Heart right ventricle (tissue), 16 donors: ENCODE measurements at regions of chr5 and their contacts with region 1.

Region 1: GRCh38 chr5:173144200-173145176 is at the start of gene BNIP1:
- DNase-seq: peak; percentile 96 to 97
- ATAC-seq: peak; percentile 93 to 97 (median 95)
- H3K4me3 ChIP-seq: peak within 1 kb of the TSS; percentile 51 to 98 (median 86)
- H3K27ac ChIP-seq: peak within 1 kb of the TSS in 9 of 10 donors; percentile 82 to 95 (median 88)
- H3K4me1 ChIP-seq: peaks cover 0 to 18% (median 11%) of the 10 kb centered on the region in 9 donors
- H3K27me3 ChIP-seq: no peaks in the 10 kb centered on the region
- CTCF ChIP-seq: peak; percentile 88 to 98 (median 94)
- total RNA-seq, gene BNIP1: 8.5 to 12.7 (median 9.9) TPM

Region 2: GRCh38 chr5:172984243-172984953 is 160.1 kb before region 1 on chr5:
- intact Hi-C with region 1: loop called in 5 of 10 experiments (anchors 5 to 10 kb)
- DNase-seq: peak; percentile 46 to 50
- ATAC-seq: peak; percentile 50 to 77 (median 66)
- H3K4me3 ChIP-seq: peak overlapping the region; percentile 65 to 95 (median 88)
- H3K27ac ChIP-seq: peak overlapping the region; percentile 86 to 95 (median 92)
- H3K4me1 ChIP-seq: peaks cover 0 to 43% (median 17%) of the 10 kb centered on the region in 9 donors
- H3K27me3 ChIP-seq: no peaks in the 10 kb centered on the region
- CTCF ChIP-seq: peak in 8 of 9 donors; percentile 18 to 56 (median 35)

Region 3: DNA sequence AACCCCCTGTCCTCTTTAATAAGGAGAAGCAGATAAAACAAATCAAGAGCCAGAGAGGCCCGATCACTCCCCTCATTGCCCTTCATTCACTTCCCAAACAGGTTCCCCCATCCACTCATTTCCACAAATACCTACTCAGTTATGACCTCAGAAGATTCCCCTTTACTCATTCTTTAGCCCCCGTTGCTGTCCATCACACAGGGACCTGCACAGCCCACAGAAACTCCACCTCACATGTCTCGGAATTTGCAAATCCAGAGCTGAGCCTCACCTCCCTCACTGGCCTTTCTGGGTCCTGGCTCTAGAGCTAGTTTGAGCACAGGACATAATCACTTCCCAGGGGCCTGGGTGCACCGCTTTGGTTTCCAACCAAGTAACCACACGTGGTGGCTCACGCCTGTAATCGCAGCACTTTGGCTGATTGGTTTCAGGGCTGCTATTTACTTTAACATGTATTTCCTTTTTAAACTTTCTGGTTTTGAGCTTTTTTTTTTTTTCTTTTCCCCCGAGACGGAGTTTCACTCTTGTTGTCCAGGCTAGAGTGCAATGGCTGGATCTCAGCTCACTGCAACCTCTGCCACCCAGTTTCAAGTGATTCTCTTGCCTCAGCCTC is 143.2 kb before region 1 on chr5:
- intact Hi-C with region 1: loop called in 1 of 10 experiments (anchors 10 kb)
- DNase-seq: no peak
- ATAC-seq: peak in 1 of 8 donors; percentile 37
- H3K4me3 ChIP-seq: no peak overlapping the region
- H3K27ac ChIP-seq: no peak overlapping the region
- H3K4me1 ChIP-seq: peaks cover 14 to 68% (median 50%) of the 10 kb centered on the region in 9 donors
- H3K27me3 ChIP-seq: no peaks in the 10 kb centered on the region
- CTCF ChIP-seq: no peak

Region 4: GRCh38 chr5:173016621-173017047 is 127.9 kb before region 1 on chr5:
- intact Hi-C with region 1: loop called in 1 of 10 experiments (anchors 10 kb)
- DNase-seq: peak in 1 of 2 donors; percentile 42
- ATAC-seq: peak; percentile 63 to 92 (median 87)
- H3K4me3 ChIP-seq: no peak overlapping the region
- H3K27ac ChIP-seq: peak overlapping the region; percentile 3 to 90 (median 72)
- H3K4me1 ChIP-seq: peaks cover 2 to 95% (median 33%) of the 10 kb centered on the region in 9 donors
- H3K27me3 ChIP-seq: no peaks in the 10 kb centered on the region
- CTCF ChIP-seq: no peak

Region 5: GRCh38 chr5:173057062-173057924 is 87.2 kb before region 1 on chr5:
- intact Hi-C with region 1: loop called in 2 of 10 experiments (anchors 1 to 2 kb)
- DNase-seq: peak; percentile 99
- ATAC-seq: peak; percentile 93 to 98 (median 97)
- H3K4me3 ChIP-seq: peak overlapping the region; percentile 85 to 100 (median 100)
- H3K27ac ChIP-seq: peak overlapping the region; percentile 94 to 99 (median 97)
- H3K4me1 ChIP-seq: peaks cover 0 to 53% (median 37%) of the 10 kb centered on the region in 9 donors
- H3K27me3 ChIP-seq: no peaks in the 10 kb centered on the region
- CTCF ChIP-seq: peak in 5 of 9 donors; percentile 19 to 37 (median 26)